CD4-positive, alpha-beta memory T cell (primary cell): ENCODE measurements at regions of chr7 and their contacts with region 1.

Region 1: GRCh38 chr7:97835296-97836138 is 36.7 kb downstream of the ASNS start:
- DNase-seq: peak; percentile 35 to 48 (median 39)
- H3K4me3 ChIP-seq: no peak overlapping the region
- H3K4me3 Mint-ChIP-seq: peak overlapping the region in 1 of 8 donors; percentile 29
- H3K27ac ChIP-seq: no peak overlapping the region
- H3K27ac Mint-ChIP-seq: no peak overlapping the region
- H3K4me1 ChIP-seq: no peaks in the 10 kb centered on the region
- H3K4me1 Mint-ChIP-seq: peaks cover 0 to 2% (median 1%) of the 10 kb centered on the region in 4 donors
- H3K27me3 ChIP-seq: peaks cover 4% of the 10 kb centered on the region
- H3K27me3 Mint-ChIP-seq: peaks cover 26 to 38% of the 10 kb centered on the region in 2 donors

Region 2: GRCh38 chr7:96075510-96076349 is 1759.8 kb before region 1 on chr7:
- CTCF ChIA-PET with region 1: no interaction called
- POLR2A ChIA-PET with region 1: no interaction called
- intact Hi-C with region 1: loop called (anchors 5 kb)
- DNase-seq: peak; percentile 36 to 49 (median 42)
- H3K4me3 ChIP-seq: peak overlapping the region in 1 of 2 donors; percentile 30
- H3K4me3 Mint-ChIP-seq: peak overlapping the region; percentile 86 to 95 (median 88)
- H3K27ac ChIP-seq: no peak overlapping the region
- H3K27ac Mint-ChIP-seq: no peak overlapping the region
- H3K4me1 ChIP-seq: peaks cover 10% of the 10 kb centered on the region
- H3K4me1 Mint-ChIP-seq: peaks cover 0 to 9% (median 6%) of the 10 kb centered on the region in 4 donors
- H3K27me3 ChIP-seq: peaks cover 15% of the 10 kb centered on the region
- H3K27me3 Mint-ChIP-seq: peaks cover 17 to 27% of the 10 kb centered on the region in 2 donors

Region 3: DNA sequence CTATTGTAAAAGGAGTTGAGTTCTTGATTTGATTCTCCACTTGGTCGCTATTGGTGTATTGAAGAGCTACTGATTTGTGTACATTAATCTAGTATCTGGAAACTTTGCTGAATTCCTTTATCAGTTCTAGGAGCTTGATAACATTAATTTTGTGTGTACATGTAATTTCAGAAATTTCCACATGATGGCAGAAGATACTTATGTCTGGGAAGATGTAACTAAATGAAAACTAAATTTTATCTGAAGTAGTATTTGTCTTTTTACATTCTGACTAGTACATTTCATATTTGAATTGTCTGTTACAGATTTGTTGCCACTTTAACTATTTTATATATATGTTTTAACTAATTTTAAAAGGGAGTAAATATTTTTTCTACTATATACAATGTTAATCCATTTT is 690.4 kb before region 1 on chr7:
- CTCF ChIA-PET with region 1: no interaction called
- POLR2A ChIA-PET with region 1: no interaction called
- intact Hi-C with region 1: loop called (anchors 1 kb)
- DNase-seq: peak in 4 of 5 donors; percentile 1 to 9 (median 2)
- H3K4me3 ChIP-seq: no peak overlapping the region
- H3K4me3 Mint-ChIP-seq: no peak overlapping the region
- H3K27ac ChIP-seq: no peak overlapping the region
- H3K27ac Mint-ChIP-seq: no peak overlapping the region
- H3K4me1 ChIP-seq: no peaks in the 10 kb centered on the region
- H3K4me1 Mint-ChIP-seq: peaks cover 0 to 12% (median under 1%) of the 10 kb centered on the region in 4 donors
- H3K27me3 ChIP-seq: no peaks in the 10 kb centered on the region
- H3K27me3 Mint-ChIP-seq: no peaks in the 10 kb centered on the region

Region 4: DNA sequence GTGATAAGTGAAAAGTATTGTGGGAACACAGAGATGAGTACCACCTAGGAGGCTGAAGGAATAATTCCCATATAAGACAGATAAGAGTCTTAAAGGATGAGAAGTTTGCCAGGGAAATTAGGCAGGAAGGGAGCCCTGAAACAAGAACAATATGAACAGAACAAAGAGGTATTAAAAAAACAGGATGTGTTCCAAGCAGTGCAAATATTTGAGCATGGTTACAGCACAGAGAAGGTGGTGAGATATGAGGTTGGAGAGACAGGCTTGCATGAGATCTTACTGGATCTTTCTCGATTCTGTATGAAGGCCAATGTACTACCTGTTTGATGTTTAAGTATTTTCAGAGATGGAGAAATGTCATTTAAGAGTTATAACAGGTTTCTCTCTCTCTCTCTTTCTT is 83.3 kb before region 1 on chr7:
- CTCF ChIA-PET with region 1: no interaction called
- POLR2A ChIA-PET with region 1: no interaction called
- intact Hi-C with region 1: no loop called
- DNase-seq: no peak
- H3K4me3 ChIP-seq: no peak overlapping the region
- H3K4me3 Mint-ChIP-seq: no peak overlapping the region
- H3K27ac ChIP-seq: no peak overlapping the region
- H3K27ac Mint-ChIP-seq: no peak overlapping the region
- H3K4me1 ChIP-seq: no peaks in the 10 kb centered on the region
- H3K4me1 Mint-ChIP-seq: no peaks in the 10 kb centered on the region
- H3K27me3 ChIP-seq: no peaks in the 10 kb centered on the region
- H3K27me3 Mint-ChIP-seq: no peaks in the 10 kb centered on the region

Region 5: DNA sequence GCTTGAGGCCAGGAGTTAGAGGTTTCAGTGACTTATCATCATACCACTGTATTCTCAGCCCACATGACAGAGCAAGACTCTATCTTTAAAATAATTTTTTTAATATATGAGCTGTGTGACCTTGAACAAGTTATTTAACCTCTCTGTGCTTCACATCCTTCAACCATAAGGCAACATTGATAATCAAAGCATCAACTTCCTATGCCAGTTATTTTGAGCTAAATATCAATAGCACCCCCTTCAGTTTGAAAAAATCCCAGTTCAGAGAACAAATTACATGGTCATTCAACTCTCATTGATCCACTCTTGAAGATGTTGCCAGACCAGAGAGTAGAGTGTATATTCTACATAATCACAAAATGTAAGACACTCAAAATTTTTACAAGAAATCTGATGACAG is 16.4 kb before region 1 on chr7:
- CTCF ChIA-PET with region 1: interaction called, 21 read pairs
- POLR2A ChIA-PET with region 1: no interaction called
- intact Hi-C with region 1: no loop called
- DNase-seq: no peak
- H3K4me3 ChIP-seq: no peak overlapping the region
- H3K4me3 Mint-ChIP-seq: no peak overlapping the region
- H3K27ac ChIP-seq: no peak overlapping the region
- H3K27ac Mint-ChIP-seq: no peak overlapping the region
- H3K4me1 ChIP-seq: no peaks in the 10 kb centered on the region
- H3K4me1 Mint-ChIP-seq: no peaks in the 10 kb centered on the region
- H3K27me3 ChIP-seq: no peaks in the 10 kb centered on the region
- H3K27me3 Mint-ChIP-seq: peaks cover 0 to 3% of the 10 kb centered on the region in 2 donors

Region 6: GRCh38 chr7:97872025-97872669 is 36.6 kb after region 1 on chr7 and contains the start of gene ASNS:
- CTCF ChIA-PET with region 1: no interaction called
- POLR2A ChIA-PET with region 1: no interaction called
- intact Hi-C with region 1: loop called (anchors 2 kb)
- DNase-seq: peak; percentile 80 to 88 (median 85)
- H3K4me3 ChIP-seq: peak within 1 kb of the TSS; percentile 75 to 78
- H3K4me3 Mint-ChIP-seq: peak within 1 kb of the TSS; percentile 85 to 93 (median 90)
- H3K27ac ChIP-seq: peak within 1 kb of the TSS; percentile 46
- H3K27ac Mint-ChIP-seq: peak within 1 kb of the TSS; percentile 84 to 95 (median 92)
- H3K4me1 ChIP-seq: peaks cover 20% of the 10 kb centered on the region
- H3K4me1 Mint-ChIP-seq: peaks cover 9 to 19% (median 12%) of the 10 kb centered on the region in 4 donors
- H3K27me3 ChIP-seq: no peaks in the 10 kb centered on the region
- H3K27me3 Mint-ChIP-seq: no peaks in the 10 kb centered on the region
- total RNA-seq, gene ASNS: 36.6 to 37.9 TPM

Region 7: GRCh38 chr7:98315341-98315983 is 479.9 kb after region 1 on chr7:
- CTCF ChIA-PET with region 1: no interaction called
- POLR2A ChIA-PET with region 1: no interaction called
- intact Hi-C with region 1: no loop called
- DNase-seq: no peak
- H3K4me3 ChIP-seq: no peak overlapping the region
- H3K4me3 Mint-ChIP-seq: no peak overlapping the region
- H3K27ac ChIP-seq: no peak overlapping the region
- H3K27ac Mint-ChIP-seq: no peak overlapping the region
- H3K4me1 ChIP-seq: no peaks in the 10 kb centered on the region
- H3K4me1 Mint-ChIP-seq: no peaks in the 10 kb centered on the region
- H3K27me3 ChIP-seq: no peaks in the 10 kb centered on the region
- H3K27me3 Mint-ChIP-seq: peaks cover 0 to 1% of the 10 kb centered on the region in 2 donors

Region 8: GRCh38 chr7:98372993-98373392 is 537.5 kb after region 1 on chr7:
- CTCF ChIA-PET with region 1: no interaction called
- POLR2A ChIA-PET with region 1: no interaction called
- intact Hi-C with region 1: no loop called
- DNase-seq: no peak
- H3K4me3 ChIP-seq: no peak overlapping the region
- H3K4me3 Mint-ChIP-seq: no peak overlapping the region
- H3K27ac ChIP-seq: no peak overlapping the region
- H3K27ac Mint-ChIP-seq: no peak overlapping the region
- H3K4me1 ChIP-seq: no peaks in the 10 kb centered on the region
- H3K4me1 Mint-ChIP-seq: no peaks in the 10 kb centered on the region
- H3K27me3 ChIP-seq: no peaks in the 10 kb centered on the region
- H3K27me3 Mint-ChIP-seq: peaks cover 0 to 2% of the 10 kb centered on the region in 2 donors

Region 9: GRCh38 chr7:99551767-99552463 is 1716.4 kb after region 1 on chr7 and contains the start of gene FAM200A:
- CTCF ChIA-PET with region 1: no interaction called
- POLR2A ChIA-PET with region 1: no interaction called
- intact Hi-C with region 1: no loop called
- DNase-seq: peak; percentile 82 to 88 (median 84)
- H3K4me3 ChIP-seq: peak within 1 kb of the TSS; percentile 94 to 95
- H3K4me3 Mint-ChIP-seq: peak within 1 kb of the TSS; percentile 86 to 98 (median 92)
- H3K27ac ChIP-seq: peak within 1 kb of the TSS; percentile 97
- H3K27ac Mint-ChIP-seq: peak within 1 kb of the TSS; percentile 76 to 99 (median 91)
- H3K4me1 ChIP-seq: peaks cover 33% of the 10 kb centered on the region
- H3K4me1 Mint-ChIP-seq: peaks cover 16 to 48% (median 30%) of the 10 kb centered on the region in 4 donors
- H3K27me3 ChIP-seq: no peaks in the 10 kb centered on the region
- H3K27me3 Mint-ChIP-seq: no peaks in the 10 kb centered on the region
- total RNA-seq, gene FAM200A: 12.9 to 13.0 TPM